Ascending aorta (tissue), 2 donors: ENCODE measurements at regions of chr6 and their contacts with region 1.

Region 1: DNA sequence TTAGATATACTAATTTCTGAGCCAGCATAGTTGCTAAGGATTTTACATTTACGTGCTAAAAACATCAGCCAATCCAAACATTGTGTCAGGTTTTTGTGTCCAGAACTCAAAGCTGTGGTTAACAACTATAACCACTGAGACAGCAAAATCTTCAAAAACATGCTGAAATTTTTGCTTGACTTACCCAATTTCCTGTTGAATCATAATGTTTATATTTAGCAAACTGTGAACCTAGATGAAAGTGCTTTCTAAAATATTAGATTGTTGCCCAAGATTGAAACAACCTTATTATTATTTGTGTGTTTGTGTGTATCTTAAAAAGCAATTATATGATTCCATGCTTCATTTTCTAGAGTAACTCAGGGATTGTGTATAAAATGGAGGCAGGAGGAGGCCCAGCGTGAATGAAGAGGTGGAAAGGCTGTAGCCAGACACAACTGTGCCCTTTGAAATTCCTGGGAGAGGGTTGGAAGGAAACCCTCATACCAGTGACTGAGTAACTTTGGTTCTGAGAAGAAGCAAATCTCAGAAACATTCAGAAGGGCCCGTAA is 48.0 kb downstream of the ARMC2 start:
- DNase-seq: no peak
- H3K4me3 ChIP-seq: no peak overlapping the region
- H3K27ac ChIP-seq: peak overlapping the region; percentile 78 to 82
- H3K4me1 ChIP-seq: peaks cover 9 to 30% of the 10 kb centered on the region in 2 donors
- H3K27me3 ChIP-seq: no peaks in the 10 kb centered on the region
- CTCF ChIP-seq: no peak

Region 2: DNA sequence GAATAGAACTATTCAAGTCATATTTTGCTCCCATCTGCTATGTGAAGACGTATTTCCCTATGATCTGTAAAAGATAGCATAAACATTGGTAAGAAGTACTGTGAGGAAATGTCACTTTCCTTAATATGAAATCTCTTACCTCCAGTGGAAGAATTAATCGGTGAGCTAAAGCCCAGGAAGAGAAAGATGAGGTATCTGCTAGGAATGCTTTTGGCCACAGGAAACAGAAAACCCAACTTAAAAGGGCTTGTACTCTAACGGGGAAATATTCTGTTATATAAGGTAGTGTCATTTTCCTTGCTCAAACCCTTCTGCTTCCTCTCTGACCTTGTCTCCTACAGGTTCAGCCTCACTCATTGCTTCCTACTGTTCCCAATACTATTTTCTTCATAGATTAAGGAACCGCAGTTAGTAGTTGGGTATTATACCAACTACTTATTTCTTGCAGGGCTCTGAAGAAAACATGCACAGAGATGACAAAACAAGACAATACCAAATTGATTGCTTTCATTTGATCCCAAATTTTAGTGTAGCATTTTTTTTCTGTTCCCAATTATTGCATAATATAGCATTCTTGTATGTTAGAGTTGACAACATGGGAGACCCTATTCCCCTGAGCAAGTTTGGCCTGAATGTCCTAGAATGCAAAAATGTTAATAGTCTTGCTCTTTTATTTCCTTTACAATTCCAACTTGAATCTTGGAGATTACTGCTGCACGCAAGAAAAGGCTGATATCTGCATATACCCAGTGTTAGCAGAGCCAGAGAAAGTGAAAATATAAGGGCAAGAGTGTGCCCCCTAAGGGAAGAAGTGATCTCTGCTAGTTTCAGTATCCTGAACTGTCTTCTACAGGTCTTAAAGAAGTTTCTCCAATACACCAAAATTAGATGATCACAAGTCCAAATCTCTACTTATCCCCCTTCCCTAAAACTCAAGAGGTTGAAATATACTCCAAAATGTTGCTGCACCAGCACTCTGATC is 536.0 kb before region 1 on chr6:
- intact Hi-C with region 1: no loop called
- DNase-seq: no peak
- H3K4me3 ChIP-seq: no peak overlapping the region
- H3K27ac ChIP-seq: no peak overlapping the region
- H3K4me1 ChIP-seq: no peaks in the 10 kb centered on the region
- H3K27me3 ChIP-seq: no peaks in the 10 kb centered on the region
- CTCF ChIP-seq: no peak

Region 3: GRCh38 chr6:108541838-108542759 is 354.1 kb before region 1 on chr6:
- intact Hi-C with region 1: loop called (anchors 1 kb)
- DNase-seq: peak in 1 of 2 donors; percentile 75
- H3K4me3 ChIP-seq: no peak overlapping the region
- H3K27ac ChIP-seq: no peak overlapping the region
- H3K4me1 ChIP-seq: no peaks in the 10 kb centered on the region
- H3K27me3 ChIP-seq: no peaks in the 10 kb centered on the region
- CTCF ChIP-seq: peak; percentile 79 to 83 (median 82)

Region 4: GRCh38 chr6:108655806-108656651 is 240.2 kb before region 1 on chr6:
- intact Hi-C with region 1: no loop called
- DNase-seq: no peak
- H3K4me3 ChIP-seq: peak overlapping the region; percentile 8 to 29
- H3K27ac ChIP-seq: peak overlapping the region; percentile 84 to 90
- H3K4me1 ChIP-seq: peaks cover 23 to 77% of the 10 kb centered on the region in 2 donors
- H3K27me3 ChIP-seq: no peaks in the 10 kb centered on the region
- CTCF ChIP-seq: no peak

Region 5: GRCh38 chr6:108835218-108835850 is 60.9 kb before region 1 on chr6:
- intact Hi-C with region 1: loop called (anchors 2 kb)
- DNase-seq: peak; percentile 58 to 94
- H3K4me3 ChIP-seq: no peak overlapping the region
- H3K27ac ChIP-seq: peak overlapping the region; percentile 9 to 30
- H3K4me1 ChIP-seq: peaks cover 0 to 11% of the 10 kb centered on the region in 2 donors
- H3K27me3 ChIP-seq: no peaks in the 10 kb centered on the region
- CTCF ChIP-seq: peak; percentile 83 to 93 (median 87)

Region 6: DNA sequence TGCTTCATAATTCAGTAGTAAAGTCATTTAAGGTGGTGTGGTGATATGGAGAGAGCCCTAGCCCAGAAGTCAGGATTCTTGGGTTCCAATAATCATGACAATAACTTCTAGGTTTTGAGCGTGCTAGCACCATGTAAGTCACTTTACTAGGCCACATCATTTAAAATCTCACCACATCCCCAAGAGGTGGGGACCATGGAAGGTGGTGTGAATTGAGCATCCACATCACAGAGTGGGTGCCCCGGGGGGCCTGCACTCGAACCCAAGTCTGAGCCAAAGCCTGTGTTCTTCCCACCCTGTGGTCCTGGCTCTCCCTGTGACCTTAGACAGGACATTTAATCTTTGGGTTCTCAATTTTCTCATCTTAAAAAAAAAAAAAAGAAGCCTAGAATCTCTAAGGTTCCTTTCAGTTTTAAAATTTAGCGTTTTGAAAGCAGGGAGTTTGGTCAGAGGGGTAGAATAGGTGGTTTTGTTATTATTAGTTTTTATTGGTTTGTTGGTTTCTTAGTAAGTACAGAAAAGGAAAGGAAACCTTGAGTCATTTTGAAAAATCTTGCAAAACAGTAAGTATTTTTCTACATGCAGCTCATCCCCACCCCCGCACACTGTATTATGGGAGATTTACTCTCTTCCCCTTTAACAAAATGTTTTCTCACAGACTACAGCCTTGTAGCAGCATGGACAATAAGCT is 21.6 kb before region 1 on chr6:
- intact Hi-C with region 1: loop called (anchors 2 kb)
- DNase-seq: peak in 1 of 2 donors; percentile 72
- H3K4me3 ChIP-seq: peak overlapping the region in 1 of 2 donors; percentile 36
- H3K27ac ChIP-seq: peak overlapping the region; percentile 80 to 90
- H3K4me1 ChIP-seq: peaks cover 8 to 44% of the 10 kb centered on the region in 2 donors
- H3K27me3 ChIP-seq: no peaks in the 10 kb centered on the region
- CTCF ChIP-seq: no peak

Region 7: GRCh38 chr6:109009236-109009961 is 113.2 kb after region 1 on chr6:
- intact Hi-C with region 1: loop called (anchors 5 kb)
- DNase-seq: peak; percentile 62 to 96
- H3K4me3 ChIP-seq: peak overlapping the region; percentile 69 to 99
- H3K27ac ChIP-seq: peak overlapping the region; percentile 77 to 94
- H3K4me1 ChIP-seq: peaks cover 0 to 11% of the 10 kb centered on the region in 2 donors
- H3K27me3 ChIP-seq: no peaks in the 10 kb centered on the region
- CTCF ChIP-seq: peak in 2 of 3 experiments; percentile 5 to 54

Region 8: GRCh38 chr6:109255946-109256640 is 359.9 kb after region 1 on chr6:
- intact Hi-C with region 1: no loop called
- DNase-seq: no peak
- H3K4me3 ChIP-seq: no peak overlapping the region
- H3K27ac ChIP-seq: no peak overlapping the region
- H3K4me1 ChIP-seq: no peaks in the 10 kb centered on the region
- H3K27me3 ChIP-seq: no peaks in the 10 kb centered on the region
- CTCF ChIP-seq: no peak